ENCODE measurements at regions of chr3 and their contacts with region 1.

Region 1: DNA sequence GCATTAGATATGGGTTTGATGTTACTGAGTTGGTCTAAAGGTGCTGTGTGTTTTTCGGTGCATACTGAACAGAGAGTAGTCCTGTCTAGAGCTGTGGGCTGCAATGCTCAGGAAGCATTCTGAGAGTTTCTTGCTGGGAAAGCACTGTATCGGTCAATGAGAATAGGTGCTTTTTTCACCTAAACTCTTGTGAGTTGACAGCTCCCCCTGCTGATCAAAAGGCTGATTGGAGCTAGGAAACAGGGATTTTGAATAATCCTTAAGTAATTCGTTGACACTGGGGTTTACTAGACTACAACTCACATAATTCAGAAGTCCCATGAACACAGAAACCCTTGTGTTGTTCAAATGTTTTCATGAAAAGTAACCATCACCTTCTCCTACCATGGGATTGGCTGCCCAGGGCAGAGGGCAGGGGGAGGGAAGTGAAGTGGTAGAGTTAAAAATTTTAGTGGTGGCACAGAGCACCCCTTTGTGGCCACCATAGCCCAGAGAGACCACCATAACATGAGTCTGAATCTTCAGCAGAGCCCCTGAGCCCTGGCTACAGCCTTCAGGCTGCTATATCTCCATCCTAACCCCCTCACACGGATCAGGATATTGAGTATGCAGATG is 13.0 kb upstream of the MANF start:
- DNase-seq: no peak
- H3K4me3 ChIP-seq: no peak overlapping the region
- H3K27ac ChIP-seq: no peak overlapping the region
- H3K4me1 ChIP-seq: no peaks in the 10 kb centered on the region
- H3K27me3 ChIP-seq: peaks cover 0 to 4% (median 0%) of the 10 kb centered on the region in 4 donors
- CTCF ChIP-seq: peak; percentile 11 to 81 (median 68)
- POLR2A ChIP-seq: no peak

Region 2: DNA sequence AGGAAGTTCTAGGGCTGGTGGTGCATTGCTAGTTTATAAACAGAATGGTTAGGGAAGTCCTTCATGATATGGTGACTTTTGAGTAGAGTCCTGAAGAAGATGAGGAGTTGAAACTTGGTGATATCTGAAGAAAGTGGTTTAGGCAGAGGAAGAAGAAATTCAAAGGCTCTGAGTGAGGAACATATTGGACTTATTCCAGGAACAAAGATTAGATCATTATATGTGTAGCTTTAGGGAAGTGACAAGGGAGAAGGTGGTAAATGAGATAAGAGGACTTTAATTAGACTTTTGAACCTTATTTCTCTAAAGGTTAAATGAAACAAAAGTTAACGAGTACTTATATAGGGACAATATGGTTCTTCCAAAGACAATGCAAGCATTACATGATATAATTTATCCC is 410.7 kb before region 1 on chr3:
- intact Hi-C with region 1: loop called (anchors 10 kb)
- DNase-seq: no peak
- H3K4me3 ChIP-seq: no peak overlapping the region
- H3K27ac ChIP-seq: no peak overlapping the region
- H3K4me1 ChIP-seq: no peaks in the 10 kb centered on the region
- H3K27me3 ChIP-seq: no peaks in the 10 kb centered on the region
- CTCF ChIP-seq: no peak
- POLR2A ChIP-seq: no peak

Region 3: DNA sequence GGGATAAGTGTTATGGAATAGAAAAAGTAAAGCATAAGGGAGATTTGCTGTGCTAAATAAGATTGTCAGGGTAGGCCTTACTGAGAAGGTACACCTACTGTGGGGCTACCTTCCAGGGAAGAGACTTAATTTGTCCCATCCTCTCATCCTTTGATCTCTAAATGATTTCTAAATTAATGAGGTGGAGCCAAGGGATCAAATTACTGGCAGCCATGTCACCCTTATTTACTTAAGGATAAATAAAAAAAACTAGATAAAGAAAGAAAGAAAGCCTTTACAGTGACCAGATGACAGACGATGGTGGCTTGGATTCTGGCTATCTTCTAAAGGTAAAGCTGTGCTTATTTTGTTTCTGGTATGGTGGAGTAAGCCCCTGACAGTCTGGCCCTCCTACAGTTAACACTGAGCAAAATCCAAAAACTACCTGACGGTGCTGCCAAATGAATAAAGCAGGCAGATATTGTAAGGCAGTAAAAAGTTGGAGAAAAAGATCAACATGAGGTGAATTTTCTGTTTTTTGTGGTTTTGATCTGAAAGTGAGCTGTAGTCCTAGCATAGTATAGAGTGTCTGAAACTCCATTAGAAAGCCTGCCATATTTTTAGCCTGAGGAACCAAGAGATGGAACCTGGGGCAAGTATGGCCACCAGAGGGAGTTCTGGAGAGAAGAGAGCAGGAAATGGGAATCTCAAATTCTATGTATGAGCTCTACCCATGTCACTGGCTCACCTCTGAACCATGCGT is 272.1 kb before region 1 on chr3:
- intact Hi-C with region 1: loop called (anchors 10 kb)
- DNase-seq: no peak
- H3K4me3 ChIP-seq: no peak overlapping the region
- H3K27ac ChIP-seq: no peak overlapping the region
- H3K4me1 ChIP-seq: no peaks in the 10 kb centered on the region
- H3K27me3 ChIP-seq: peaks cover 0 to 5% (median 0%) of the 10 kb centered on the region in 4 donors
- CTCF ChIP-seq: peak; percentile 30 to 74 (median 66)
- POLR2A ChIP-seq: no peak

Region 4: DNA sequence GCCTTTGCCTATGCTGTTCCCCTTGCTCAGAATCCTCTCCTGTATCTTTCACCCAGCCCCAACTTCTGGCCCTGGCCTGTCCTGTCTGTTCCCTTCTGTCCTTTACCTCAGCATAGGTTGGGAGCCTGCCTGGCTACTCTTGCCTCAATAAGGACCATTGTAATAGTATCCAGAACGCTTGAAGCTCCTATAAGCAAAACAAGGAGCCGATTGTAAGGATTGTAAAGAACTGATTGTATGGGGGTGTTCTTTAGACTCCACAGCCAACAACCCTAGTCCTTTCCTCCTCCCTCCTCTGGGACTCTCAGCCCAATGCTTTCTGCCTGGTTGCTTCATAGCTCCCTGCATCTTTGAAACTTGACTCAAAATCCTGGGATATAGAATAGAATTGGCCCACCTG is 147.8 kb after region 1 on chr3:
- intact Hi-C with region 1: no loop called
- DNase-seq: no peak
- H3K4me3 ChIP-seq: no peak overlapping the region
- H3K27ac ChIP-seq: no peak overlapping the region
- H3K4me1 ChIP-seq: no peaks in the 10 kb centered on the region
- H3K27me3 ChIP-seq: no peaks in the 10 kb centered on the region
- CTCF ChIP-seq: no peak
- POLR2A ChIP-seq: no peak

Region 5: GRCh38 chr3:51530490-51530889 is 158.4 kb after region 1 on chr3:
- intact Hi-C with region 1: no loop called
- DNase-seq: no peak
- H3K4me3 ChIP-seq: no peak overlapping the region
- H3K27ac ChIP-seq: no peak overlapping the region
- H3K4me1 ChIP-seq: no peaks in the 10 kb centered on the region
- H3K27me3 ChIP-seq: no peaks in the 10 kb centered on the region
- CTCF ChIP-seq: no peak
- POLR2A ChIP-seq: no peak

Measured in esophagus squamous epithelium (tissue), 5 donors.